CD14-positive monocyte (primary cell): ENCODE measurements at regions of chr2 and their contacts with region 1.

Region 1: GRCh38 chr2:159637971-159638501 is 21.7 kb upstream of the BAZ2B start:
- DNase-seq: peak; percentile 27 to 52 (median 39)
- H3K4me3 ChIP-seq: no peak overlapping the region
- H3K4me3 Mint-ChIP-seq: no peak overlapping the region
- H3K27ac ChIP-seq: no peak overlapping the region
- H3K27ac Mint-ChIP-seq: peak overlapping the region in 6 of 7 donors; percentile 5 to 83 (median 51)
- H3K4me1 ChIP-seq: peaks cover 29 to 41% of the 10 kb centered on the region in 2 donors
- H3K4me1 Mint-ChIP-seq: peaks cover 62% of the 10 kb centered on the region
- H3K27me3 ChIP-seq: no peaks in the 10 kb centered on the region
- H3K27me3 Mint-ChIP-seq: no peaks in the 10 kb centered on the region
- CTCF ChIP-seq: no peak

Region 2: GRCh38 chr2:159684796-159685195 is 46.8 kb after region 1 on chr2:
- intact Hi-C with region 1: loop called in 1 of 2 experiments (anchors 10 kb)
- DNase-seq: no peak
- H3K4me3 ChIP-seq: no peak overlapping the region
- H3K4me3 Mint-ChIP-seq: no peak overlapping the region
- H3K27ac ChIP-seq: no peak overlapping the region
- H3K27ac Mint-ChIP-seq: no peak overlapping the region
- H3K4me1 ChIP-seq: no peaks in the 10 kb centered on the region
- H3K4me1 Mint-ChIP-seq: peaks cover 8% of the 10 kb centered on the region
- H3K27me3 ChIP-seq: no peaks in the 10 kb centered on the region
- H3K27me3 Mint-ChIP-seq: peaks cover 0 to 3% (median 2%) of the 10 kb centered on the region in 3 donors
- CTCF ChIP-seq: no peak